Colonic mucosa (tissue), 4 donors: ENCODE measurements at regions of chr12 and their contacts with region 1.

Region 1: DNA sequence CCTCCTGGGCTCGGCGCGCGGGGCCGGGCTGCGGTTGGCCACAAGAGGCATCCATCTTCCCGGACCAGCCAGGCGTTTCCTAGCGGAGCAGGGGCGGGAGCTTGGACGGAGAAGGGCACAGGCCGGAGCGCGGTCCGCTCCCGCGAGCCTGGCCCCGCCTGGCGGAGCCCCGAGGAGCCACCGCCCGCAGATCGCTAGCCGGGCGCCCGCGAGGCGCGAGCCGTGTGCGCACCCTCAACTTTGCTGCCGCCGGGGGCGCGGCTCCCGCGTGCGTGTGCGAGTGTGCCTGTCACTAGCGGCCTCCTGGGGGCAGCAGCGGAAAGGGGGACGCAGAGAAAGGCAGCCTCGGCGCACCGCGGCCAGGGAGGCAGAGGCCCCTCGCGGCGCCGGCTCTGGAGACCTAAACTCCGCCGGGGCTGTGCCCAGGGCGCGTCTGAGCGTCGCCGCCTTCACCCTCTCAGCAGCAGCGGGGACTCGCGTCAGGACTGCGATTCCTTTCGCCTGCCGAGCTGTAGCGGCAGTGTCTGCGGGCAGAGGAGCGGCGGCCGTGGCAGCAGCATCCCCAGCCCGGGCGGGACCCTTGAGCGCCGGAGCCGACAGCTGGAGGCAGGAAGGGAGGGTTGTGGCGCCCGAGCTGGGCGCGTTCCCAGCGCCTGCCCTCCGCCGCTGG is 644 bp upstream of the SRGAP1 start:
- DNase-seq: peak; percentile 92
- H3K4me3 ChIP-seq: peak overlapping the region; percentile 67
- H3K27ac ChIP-seq: peak overlapping the region; percentile 78
- H3K4me1 ChIP-seq: no peaks in the 10 kb centered on the region
- H3K27me3 ChIP-seq: no peaks in the 10 kb centered on the region
- CTCF ChIP-seq: peak; percentile 91

Region 2: GRCh38 chr12:63470161-63470560 is 373.7 kb before region 1 on chr12:
- intact Hi-C with region 1: no loop called
- DNase-seq: no peak
- H3K4me3 ChIP-seq: no peak overlapping the region
- H3K27ac ChIP-seq: no peak overlapping the region
- H3K4me1 ChIP-seq: no peaks in the 10 kb centered on the region
- H3K27me3 ChIP-seq: no peaks in the 10 kb centered on the region
- CTCF ChIP-seq: no peak

Region 3: DNA sequence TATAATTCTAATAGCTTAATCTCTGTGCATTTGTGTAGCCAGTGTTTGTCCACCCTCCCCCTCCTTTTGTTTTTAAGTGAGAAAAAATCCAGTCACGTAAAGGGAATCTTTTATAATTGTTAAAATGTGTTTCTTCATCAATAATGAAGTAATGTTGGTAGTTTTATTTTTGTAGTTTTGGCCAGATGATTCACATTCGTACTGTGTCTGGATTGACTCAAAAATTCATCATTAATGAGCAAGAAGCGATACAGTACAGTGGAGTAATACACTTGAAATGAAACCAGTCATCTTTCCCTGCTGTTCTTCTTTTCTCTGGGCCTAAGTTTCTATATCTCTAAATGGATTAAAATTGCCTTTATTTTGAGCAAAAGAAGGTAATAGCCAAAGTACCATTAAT is 87.1 kb after region 1 on chr12:
- intact Hi-C with region 1: loop called (anchors 10 kb)
- DNase-seq: no peak
- H3K4me3 ChIP-seq: no peak overlapping the region
- H3K27ac ChIP-seq: no peak overlapping the region
- H3K4me1 ChIP-seq: no peaks in the 10 kb centered on the region
- H3K27me3 ChIP-seq: no peaks in the 10 kb centered on the region
- CTCF ChIP-seq: no peak

Region 4: DNA sequence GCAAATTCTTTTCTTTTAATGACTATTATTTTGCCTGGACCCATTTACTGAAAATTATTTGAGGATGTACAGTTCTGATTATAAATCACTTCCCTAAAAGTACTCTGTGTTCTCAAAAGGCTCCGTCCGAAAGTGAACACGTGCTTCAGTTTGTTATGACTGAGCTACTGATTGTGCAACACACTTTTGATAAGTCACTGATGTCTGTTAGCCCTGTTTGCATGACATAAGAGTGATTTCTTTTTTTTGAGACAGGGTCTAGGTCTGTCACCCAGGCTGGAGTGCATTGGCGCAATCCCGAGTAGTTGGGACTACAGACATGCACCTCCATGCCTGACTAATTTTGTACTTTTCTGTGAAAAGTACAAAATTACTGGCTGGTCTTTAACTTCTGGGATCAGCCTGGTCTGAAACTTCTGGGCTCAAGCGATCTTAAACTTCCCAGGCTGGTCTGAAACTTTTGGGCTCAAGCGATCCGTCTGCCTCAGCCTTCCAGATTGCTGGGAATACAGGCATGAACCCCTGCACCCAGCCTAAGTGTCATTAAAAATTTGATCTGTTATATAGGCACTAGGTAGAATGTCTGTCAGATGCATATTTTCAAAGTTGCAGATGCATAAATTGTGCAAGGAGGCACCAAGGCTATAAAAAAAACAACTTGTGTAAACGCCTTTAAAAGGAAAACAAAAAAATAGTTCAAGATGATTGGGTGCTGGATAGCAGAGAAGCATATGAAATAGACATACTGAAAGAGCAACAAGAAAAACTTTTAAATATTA is 112.2 kb after region 1 on chr12:
- intact Hi-C with region 1: no loop called
- DNase-seq: no peak
- H3K4me3 ChIP-seq: no peak overlapping the region
- H3K27ac ChIP-seq: peak overlapping the region; percentile 47
- H3K4me1 ChIP-seq: no peaks in the 10 kb centered on the region
- H3K27me3 ChIP-seq: no peaks in the 10 kb centered on the region
- CTCF ChIP-seq: no peak

Region 5: DNA sequence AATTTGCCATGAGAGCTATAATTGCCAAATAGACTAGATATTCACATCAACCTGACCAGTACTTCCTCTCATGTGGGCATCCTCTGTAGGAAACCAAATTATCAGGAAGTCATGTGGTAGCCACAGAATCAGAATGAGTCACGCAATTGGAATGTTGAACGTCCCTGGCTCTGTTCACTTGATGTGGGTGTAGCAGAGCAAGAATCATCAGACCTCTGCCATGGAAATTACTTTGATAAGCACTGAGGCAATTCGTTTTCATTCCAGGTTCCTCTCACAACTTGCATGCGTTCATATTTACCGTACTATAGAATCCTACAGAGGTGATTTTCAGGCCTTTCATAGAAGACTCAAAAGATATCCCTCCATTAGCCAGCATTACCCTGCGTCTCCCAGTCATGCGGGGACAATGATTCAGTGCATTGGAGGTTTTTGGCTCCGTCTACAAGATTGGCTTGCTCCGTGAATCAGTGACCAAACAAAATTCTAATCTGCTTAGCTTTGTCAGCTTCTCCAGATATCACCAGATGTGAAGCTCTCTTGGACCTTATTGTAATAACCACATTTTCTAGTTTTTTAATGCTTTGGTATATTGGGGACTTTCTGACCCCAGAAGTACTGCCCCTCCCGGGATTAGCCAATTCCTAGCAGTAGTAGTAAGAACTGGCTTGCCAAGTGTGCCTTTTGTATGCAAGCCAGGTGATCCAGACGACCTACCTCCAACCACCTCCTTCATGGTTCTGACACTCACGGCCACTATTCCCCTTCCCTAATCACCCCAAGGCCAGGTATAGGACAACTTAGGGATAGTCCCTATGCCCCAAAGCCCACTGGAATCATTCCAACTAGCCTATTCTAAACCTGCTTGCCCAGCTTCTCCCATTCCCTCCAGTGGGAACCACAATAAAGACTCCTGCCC is 244.8 kb after region 1 on chr12:
- intact Hi-C with region 1: loop called (anchors 10 kb)
- DNase-seq: peak; percentile 81
- H3K4me3 ChIP-seq: no peak overlapping the region
- H3K27ac ChIP-seq: peak overlapping the region; percentile 34
- H3K4me1 ChIP-seq: no peaks in the 10 kb centered on the region
- H3K27me3 ChIP-seq: no peaks in the 10 kb centered on the region
- CTCF ChIP-seq: no peak

Region 6: GRCh38 chr12:64181504-64182291 is 337.8 kb after region 1 on chr12:
- intact Hi-C with region 1: loop called (anchors 2 kb)
- DNase-seq: peak; percentile 50
- H3K4me3 ChIP-seq: no peak overlapping the region
- H3K27ac ChIP-seq: peak overlapping the region; percentile 1
- H3K4me1 ChIP-seq: no peaks in the 10 kb centered on the region
- H3K27me3 ChIP-seq: no peaks in the 10 kb centered on the region
- CTCF ChIP-seq: peak; percentile 53

Region 7: GRCh38 chr12:64192644-64193444 is 349.0 kb after region 1 on chr12:
- intact Hi-C with region 1: no loop called
- DNase-seq: no peak
- H3K4me3 ChIP-seq: no peak overlapping the region
- H3K27ac ChIP-seq: no peak overlapping the region
- H3K4me1 ChIP-seq: no peaks in the 10 kb centered on the region
- H3K27me3 ChIP-seq: no peaks in the 10 kb centered on the region
- CTCF ChIP-seq: no peak

Region 8: GRCh38 chr12:64256166-64256800 is 412.4 kb after region 1 on chr12:
- intact Hi-C with region 1: loop called (anchors 1 kb)
- DNase-seq: no peak
- H3K4me3 ChIP-seq: no peak overlapping the region
- H3K27ac ChIP-seq: no peak overlapping the region
- H3K4me1 ChIP-seq: no peaks in the 10 kb centered on the region
- H3K27me3 ChIP-seq: no peaks in the 10 kb centered on the region
- CTCF ChIP-seq: peak; percentile 61